Spleen (tissue), 13 donors: ENCODE measurements at regions of chr12 and their contacts with region 1.

Region 1: GRCh38 chr12:64890873-64891468 is 66.5 kb downstream of the TBC1D30 start:
- DNase-seq: no peak
- H3K4me3 ChIP-seq: no peak overlapping the region
- H3K27ac ChIP-seq: no peak overlapping the region
- H3K4me1 ChIP-seq: no peaks in the 10 kb centered on the region
- H3K27me3 ChIP-seq: peaks cover 0 to 42% (median 0%) of the 10 kb centered on the region in 7 donors
- CTCF ChIP-seq: peak; percentile 67 to 87 (median 82)
- POLR2A ChIP-seq: no peak

Region 2: DNA sequence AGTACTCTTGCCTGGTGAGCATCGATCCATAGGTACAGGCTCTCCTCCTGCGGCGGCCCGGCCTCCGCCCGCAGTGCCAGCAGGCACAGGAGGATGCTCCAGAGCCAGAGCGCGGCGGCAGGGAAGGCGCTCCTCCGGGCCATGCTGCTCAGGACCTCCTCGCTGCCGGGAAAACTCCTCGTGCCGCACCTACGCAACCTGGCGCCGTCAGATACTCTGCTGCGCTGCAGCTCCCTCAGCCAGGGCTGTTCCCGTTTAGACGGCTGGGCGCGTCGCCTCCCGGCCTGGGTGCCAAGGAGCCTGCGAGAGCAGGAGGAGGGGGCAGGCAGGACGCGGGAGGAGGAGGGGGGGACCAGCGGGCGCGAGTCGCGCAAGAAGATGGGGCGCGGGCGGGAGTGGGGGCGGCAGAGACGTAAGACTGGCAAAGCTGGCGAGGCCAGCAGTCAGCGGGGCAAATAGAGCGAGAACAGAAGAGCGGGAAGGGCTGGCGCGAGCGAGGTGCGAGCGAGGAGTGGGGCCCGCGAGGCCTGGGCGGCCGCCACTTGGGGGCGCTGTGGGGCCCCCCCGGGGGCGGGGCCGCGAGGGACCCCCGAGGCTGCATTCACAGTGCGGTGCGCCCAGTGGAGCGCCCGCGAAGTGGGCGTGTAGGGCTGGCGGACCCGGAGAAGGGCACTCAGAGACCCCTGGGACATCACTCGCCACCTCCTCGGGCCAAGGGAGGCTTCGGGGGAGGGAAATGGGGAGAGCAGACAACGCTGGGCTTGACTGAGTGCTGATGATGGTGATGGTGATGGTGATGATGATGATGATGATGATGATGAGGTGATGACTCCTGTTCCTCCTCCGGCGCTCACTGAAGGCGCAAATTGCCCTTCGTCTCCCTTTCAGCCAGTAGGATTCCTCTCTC is 230.3 kb after region 1 on chr12 and contains the start of gene WIF1:
- intact Hi-C with region 1: loop called (anchors 10 kb)
- DNase-seq: peak; percentile 84
- H3K4me3 ChIP-seq: peak within 1 kb of the TSS in 7 of 8 donors; percentile 29 to 63 (median 36)
- H3K27ac ChIP-seq: no peak within 1 kb of the TSS
- H3K4me1 ChIP-seq: peaks cover 0 to 25% (median 15%) of the 10 kb centered on the region in 6 donors
- H3K27me3 ChIP-seq: peaks cover 0 to 99% (median 53%) of the 10 kb centered on the region in 7 donors
- CTCF ChIP-seq: peak in 4 of 11 experiments; percentile 40 to 55 (median 45)
- POLR2A ChIP-seq: no peak
- total RNA-seq, gene WIF1: not detected

Region 3: GRCh38 chr12:65232476-65233077 is 341.6 kb after region 1 on chr12:
- intact Hi-C with region 1: loop called (anchors 5 kb)
- DNase-seq: no peak
- H3K4me3 ChIP-seq: no peak overlapping the region
- H3K27ac ChIP-seq: no peak overlapping the region
- H3K4me1 ChIP-seq: peaks cover 0 to 20% (median 7%) of the 10 kb centered on the region in 6 donors
- H3K27me3 ChIP-seq: no peaks in the 10 kb centered on the region
- CTCF ChIP-seq: peak; percentile 21 to 66 (median 48)
- POLR2A ChIP-seq: no peak

Region 4: GRCh38 chr12:65419284-65420072 is 528.5 kb after region 1 on chr12:
- intact Hi-C with region 1: no loop called
- DNase-seq: no peak
- H3K4me3 ChIP-seq: no peak overlapping the region
- H3K27ac ChIP-seq: no peak overlapping the region
- H3K4me1 ChIP-seq: peaks cover 0 to under 1% (median 0%) of the 10 kb centered on the region in 6 donors
- H3K27me3 ChIP-seq: no peaks in the 10 kb centered on the region
- CTCF ChIP-seq: no peak
- POLR2A ChIP-seq: no peak

Region 5: DNA sequence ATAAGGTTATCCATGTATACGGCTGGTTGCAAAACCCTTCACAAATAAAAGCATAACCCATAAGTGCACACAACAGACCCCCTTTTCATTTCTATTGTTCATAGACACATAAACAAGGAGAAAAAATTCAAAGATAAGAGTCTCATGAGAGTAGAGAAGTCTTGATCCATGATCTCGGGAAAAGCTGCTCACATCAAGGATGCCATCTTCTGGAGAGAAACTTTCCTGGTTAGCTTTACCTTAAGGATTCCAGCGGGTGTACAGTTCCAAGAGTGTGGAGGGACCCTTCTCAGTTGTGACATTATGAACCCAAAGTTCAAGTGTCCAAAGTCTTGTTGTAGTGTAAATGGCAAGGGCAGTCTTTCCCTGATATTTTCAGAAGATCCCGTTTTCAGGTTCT is 1095.1 kb after region 1 on chr12:
- intact Hi-C with region 1: loop called (anchors 10 kb)
- DNase-seq: no peak
- H3K4me3 ChIP-seq: no peak overlapping the region
- H3K27ac ChIP-seq: no peak overlapping the region
- H3K4me1 ChIP-seq: no peaks in the 10 kb centered on the region
- H3K27me3 ChIP-seq: no peaks in the 10 kb centered on the region
- CTCF ChIP-seq: no peak
- POLR2A ChIP-seq: no peak

Region 6: GRCh38 chr12:66107451-66107915 is 1216.5 kb after region 1 on chr12:
- intact Hi-C with region 1: loop called (anchors 10 kb)
- DNase-seq: no peak
- H3K4me3 ChIP-seq: no peak overlapping the region
- H3K27ac ChIP-seq: no peak overlapping the region
- H3K4me1 ChIP-seq: peaks cover 0 to 8% (median 3%) of the 10 kb centered on the region in 6 donors
- H3K27me3 ChIP-seq: peaks cover 0 to 10% (median 0%) of the 10 kb centered on the region in 7 donors
- CTCF ChIP-seq: peak; percentile 63 to 87 (median 80)
- POLR2A ChIP-seq: no peak